Breast epithelium (tissue), 4 donors: ENCODE measurements at regions of chr1 and their contacts with region 1.

Region 1: DNA sequence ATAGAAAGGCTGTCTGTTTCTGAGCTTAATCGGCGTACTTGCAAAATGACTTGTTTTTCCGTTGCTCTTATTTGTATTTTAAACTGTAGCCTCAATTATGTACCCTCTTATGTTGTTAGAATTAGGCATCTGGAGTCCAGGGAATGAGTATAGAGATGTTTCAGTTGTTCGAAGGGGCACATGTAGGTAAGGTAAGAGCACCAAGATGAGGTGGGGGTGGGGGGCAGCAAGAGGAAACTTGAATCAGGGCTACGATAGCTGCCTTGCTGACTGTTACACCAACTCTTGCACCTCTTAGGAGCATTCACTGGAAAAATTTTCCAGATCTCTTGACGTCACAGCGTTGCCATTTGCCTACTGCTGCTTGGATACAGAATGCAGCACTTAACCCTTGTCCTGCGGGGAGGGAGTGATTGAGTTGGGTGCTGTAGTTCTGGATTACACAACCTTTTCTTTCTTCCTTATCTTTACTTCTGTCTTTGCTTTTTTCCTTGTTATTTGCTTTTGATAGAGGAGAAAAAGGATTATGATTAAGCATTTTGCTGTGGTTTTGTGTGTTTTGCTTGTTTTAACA is 3.2 kb downstream of the ATP1B1 start:
- DNase-seq: peak; percentile 58 to 62
- H3K4me3 ChIP-seq: peak overlapping the region; percentile 10 to 90 (median 78)
- H3K27ac ChIP-seq: peak overlapping the region; percentile 90 to 91
- H3K4me1 ChIP-seq: peaks cover 0 to 21% of the 10 kb centered on the region in 2 donors
- H3K27me3 ChIP-seq: no peaks in the 10 kb centered on the region
- CTCF ChIP-seq: no peak
- POLR2A ChIP-seq: no peak

Region 2: GRCh38 chr1:169217636-169218035 is 108.0 kb after region 1 on chr1:
- intact Hi-C with region 1: no loop called
- DNase-seq: no peak
- H3K4me3 ChIP-seq: no peak overlapping the region
- H3K27ac ChIP-seq: no peak overlapping the region
- H3K4me1 ChIP-seq: no peaks in the 10 kb centered on the region
- H3K27me3 ChIP-seq: no peaks in the 10 kb centered on the region
- CTCF ChIP-seq: no peak
- POLR2A ChIP-seq: no peak

Region 3: GRCh38 chr1:169491845-169492281 is 382.2 kb after region 1 on chr1:
- intact Hi-C with region 1: loop called (anchors 5 kb)
- DNase-seq: no peak
- H3K4me3 ChIP-seq: no peak overlapping the region
- H3K27ac ChIP-seq: no peak overlapping the region
- H3K4me1 ChIP-seq: peaks cover 0 to 4% of the 10 kb centered on the region in 2 donors
- H3K27me3 ChIP-seq: no peaks in the 10 kb centered on the region
- CTCF ChIP-seq: no peak
- POLR2A ChIP-seq: no peak

Region 4: GRCh38 chr1:169727307-169727706 is 617.7 kb after region 1 on chr1:
- intact Hi-C with region 1: loop called (anchors 5 kb)
- DNase-seq: no peak
- H3K4me3 ChIP-seq: no peak overlapping the region
- H3K27ac ChIP-seq: no peak overlapping the region
- H3K4me1 ChIP-seq: no peaks in the 10 kb centered on the region
- H3K27me3 ChIP-seq: no peaks in the 10 kb centered on the region
- CTCF ChIP-seq: no peak
- POLR2A ChIP-seq: no peak